Panc1 (cell line): ENCODE measurements at regions of chr1 and their contacts with region 1.

Region 1: DNA sequence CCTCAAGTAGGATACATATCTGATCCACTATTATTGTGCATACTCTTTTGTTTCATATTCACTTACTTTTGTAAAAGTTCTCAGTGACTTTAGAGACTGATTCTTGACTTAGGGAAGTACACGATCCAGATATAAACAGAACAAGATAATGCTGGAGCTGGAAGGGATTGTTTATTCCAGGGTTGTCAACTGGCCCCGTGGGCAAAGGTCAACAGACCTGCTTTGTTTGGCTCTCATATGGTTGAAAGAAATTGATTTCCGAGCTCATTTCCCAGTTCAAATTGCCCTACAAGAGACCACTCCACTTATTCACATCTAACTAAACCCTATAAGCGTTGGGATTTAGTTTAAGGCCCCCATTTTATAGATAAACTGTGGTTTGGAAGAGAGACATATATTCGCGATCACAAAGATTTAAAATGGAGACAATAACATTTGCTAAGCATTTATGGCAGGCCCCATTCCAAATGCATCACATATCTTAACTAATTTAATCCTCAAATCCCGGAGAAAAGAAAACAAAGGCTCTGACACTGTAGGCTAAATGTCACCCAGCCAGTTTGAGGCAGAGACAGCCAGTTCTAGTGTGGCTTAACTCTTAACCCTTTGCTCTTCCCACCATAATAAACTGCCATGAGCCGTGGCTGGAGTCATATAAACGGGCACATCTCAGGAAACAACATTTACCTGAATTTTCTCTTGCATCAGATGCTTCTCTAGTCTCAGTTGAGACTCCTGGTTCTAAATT is 20.6 kb downstream of the REG4 start:
- DNase-seq: no peak
- ATAC-seq: no peak
- H3K4me3 ChIP-seq: no peak overlapping the region
- H3K27ac ChIP-seq: no peak overlapping the region
- H3K4me1 ChIP-seq: no peaks in the 10 kb centered on the region
- H3K27me3 ChIP-seq: peaks cover 8% of the 10 kb centered on the region; the same call in 1 of the 2 replicates
- CTCF ChIP-seq: no peak

Region 2: GRCh38 chr1:119743781-119744597 is 46.6 kb before region 1 on chr1:
- CTCF ChIA-PET with region 1: no interaction called
- POLR2A ChIA-PET with region 1: no interaction called
- in situ Hi-C with region 1: no loop called
- intact Hi-C with region 1: no loop called
- DNase-seq: peak; percentile 45
- ATAC-seq: peak; percentile 89
- H3K4me3 ChIP-seq: no peak overlapping the region
- H3K27ac ChIP-seq: no peak overlapping the region
- H3K4me1 ChIP-seq: no peaks in the 10 kb centered on the region
- H3K27me3 ChIP-seq: no peaks in the 10 kb centered on the region
- CTCF ChIP-seq: peak; percentile 96

Region 3: DNA sequence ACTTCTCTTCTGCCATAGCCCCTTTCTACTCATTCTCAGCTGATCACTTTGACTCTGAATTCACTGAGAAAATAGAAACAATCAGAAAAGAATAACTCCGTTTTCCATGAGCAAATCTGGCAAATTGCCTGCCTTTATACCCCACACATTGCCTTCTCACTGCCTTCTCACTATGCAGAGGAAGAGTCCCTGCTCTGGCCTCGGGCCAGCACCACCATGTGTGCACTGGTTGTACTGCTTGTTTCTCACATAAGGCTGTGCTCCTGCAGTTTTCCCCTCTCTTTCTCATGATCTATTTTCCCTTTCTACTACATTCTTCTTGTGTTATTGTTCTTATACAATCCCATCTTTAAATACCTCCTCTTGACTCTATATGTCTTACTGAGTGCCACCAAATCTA is 19.6 kb before region 1 on chr1:
- CTCF ChIA-PET with region 1: no interaction called
- POLR2A ChIA-PET with region 1: no interaction called
- in situ Hi-C with region 1: no loop called
- intact Hi-C with region 1: loop called (anchors 2 kb)
- DNase-seq: no peak
- ATAC-seq: no peak
- H3K4me3 ChIP-seq: no peak overlapping the region
- H3K27ac ChIP-seq: no peak overlapping the region
- H3K4me1 ChIP-seq: no peaks in the 10 kb centered on the region
- H3K27me3 ChIP-seq: peaks cover 43% of the 10 kb centered on the region
- CTCF ChIP-seq: no peak

Region 4: DNA sequence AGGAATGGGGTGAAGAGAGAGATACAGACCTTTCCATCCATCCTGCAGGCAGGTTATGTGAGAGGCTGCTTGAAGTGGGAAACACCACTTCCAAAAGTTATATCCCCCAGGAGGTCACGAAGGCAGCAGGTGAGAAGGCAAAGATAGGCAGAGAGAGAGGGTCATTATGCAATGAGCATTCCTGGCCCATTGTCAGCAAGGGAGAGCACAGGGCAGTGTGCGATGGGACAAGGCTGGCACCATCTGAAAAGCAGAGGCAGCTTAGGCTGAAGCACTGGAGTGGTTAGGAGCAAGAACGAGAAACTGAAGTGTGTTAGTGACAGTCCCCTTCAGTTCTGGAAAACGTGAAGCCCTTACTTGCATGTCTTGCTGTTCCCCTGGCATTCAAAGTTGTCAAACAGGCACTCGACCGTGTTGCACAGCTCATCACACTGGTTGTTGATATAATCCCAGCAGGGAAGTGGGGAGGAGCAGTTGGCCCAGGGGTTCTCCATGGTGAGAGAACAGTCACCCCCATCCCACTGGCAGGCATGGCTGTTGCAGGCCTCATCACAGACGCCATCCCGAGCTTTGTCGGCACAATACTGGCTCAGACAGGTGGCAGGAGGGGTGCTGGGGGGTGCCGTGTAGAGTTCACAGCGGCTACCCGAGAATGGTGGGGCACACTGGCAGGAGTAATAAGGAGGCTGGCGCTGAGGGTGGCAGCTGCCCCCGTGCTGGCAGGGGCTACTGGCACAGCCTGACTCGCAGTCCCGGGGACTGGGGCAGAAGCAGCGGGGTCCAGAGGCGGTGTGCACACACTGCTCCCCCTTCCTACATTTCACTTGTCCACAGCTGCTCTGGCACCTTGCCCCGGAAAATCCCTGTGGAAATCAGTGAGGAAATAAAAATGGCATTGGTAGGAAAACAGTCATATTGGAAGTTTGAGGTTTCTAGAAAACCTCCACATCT is 134.6 kb after region 1 on chr1:
- CTCF ChIA-PET with region 1: no interaction called
- POLR2A ChIA-PET with region 1: no interaction called
- in situ Hi-C with region 1: no loop called
- intact Hi-C with region 1: no loop called
- DNase-seq: no peak
- ATAC-seq: no peak
- H3K4me3 ChIP-seq: no peak overlapping the region
- H3K27ac ChIP-seq: no peak overlapping the region
- H3K4me1 ChIP-seq: no peaks in the 10 kb centered on the region
- H3K27me3 ChIP-seq: no peaks in the 10 kb centered on the region
- CTCF ChIP-seq: no peak